ENCODE measurements at regions of chr10 and their contacts with region 1.

Region 1: DNA sequence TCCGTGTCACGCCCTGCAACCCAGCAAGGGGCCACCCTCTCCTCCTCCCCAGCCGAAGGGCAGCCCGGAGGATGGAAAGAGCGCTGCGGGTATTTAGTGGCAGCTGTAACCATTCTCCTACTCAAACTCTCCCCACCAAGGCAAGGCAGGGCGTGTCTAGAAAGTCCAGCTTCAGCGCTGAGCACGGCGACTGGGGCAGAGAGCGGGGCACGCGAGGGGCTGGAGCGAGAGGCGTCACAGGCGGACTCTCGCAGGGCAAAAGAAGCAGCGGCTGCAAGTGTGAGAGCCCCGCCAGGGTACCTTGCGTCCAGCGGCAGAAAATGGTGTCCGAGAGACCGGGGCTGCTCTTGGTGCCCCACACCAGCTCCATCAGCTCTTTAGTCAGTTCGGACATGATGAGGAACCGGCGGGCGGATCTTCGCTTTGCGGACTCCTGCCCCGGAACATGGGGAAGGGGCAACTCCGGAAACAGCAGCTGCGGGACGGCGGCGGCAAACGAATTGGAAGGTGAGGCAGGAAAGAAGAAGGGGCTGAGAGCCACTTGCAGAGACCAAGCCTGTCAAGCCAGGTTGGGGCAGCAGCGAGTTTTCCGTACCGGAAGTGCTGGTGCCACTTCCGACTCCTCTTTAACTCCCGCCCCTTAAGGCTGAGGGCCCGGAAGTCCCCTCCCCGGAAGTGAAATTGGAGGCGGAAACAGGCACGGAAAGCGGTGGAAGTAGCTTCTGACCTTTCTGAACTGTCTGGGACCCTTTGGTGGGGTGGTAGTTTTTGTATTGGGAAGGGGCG is at the start of gene MINDY3:
- DNase-seq: peak; percentile 80 to 93 (median 84)
- ATAC-seq: peak; percentile 85
- H3K4me3 ChIP-seq: peak within 1 kb of the TSS; percentile 95
- H3K27ac ChIP-seq: peak within 1 kb of the TSS; percentile 71
- H3K4me1 ChIP-seq: peaks cover 6 to 14% of the 10 kb centered on the region in 2 experiments; a peak in 4 of 5 replicates
- H3K27me3 ChIP-seq: no peaks in the 10 kb centered on the region; a peak in 1 of 5 replicates
- CTCF ChIP-seq: no peak
- EP300 ChIP-seq: no peak
- POLR2A ChIP-seq: peak; percentile 81
- RAD21 ChIP-seq: no peak
- polyA plus RNA-seq, gene MINDY3: 34.2 to 35.9 TPM

Region 2: DNA sequence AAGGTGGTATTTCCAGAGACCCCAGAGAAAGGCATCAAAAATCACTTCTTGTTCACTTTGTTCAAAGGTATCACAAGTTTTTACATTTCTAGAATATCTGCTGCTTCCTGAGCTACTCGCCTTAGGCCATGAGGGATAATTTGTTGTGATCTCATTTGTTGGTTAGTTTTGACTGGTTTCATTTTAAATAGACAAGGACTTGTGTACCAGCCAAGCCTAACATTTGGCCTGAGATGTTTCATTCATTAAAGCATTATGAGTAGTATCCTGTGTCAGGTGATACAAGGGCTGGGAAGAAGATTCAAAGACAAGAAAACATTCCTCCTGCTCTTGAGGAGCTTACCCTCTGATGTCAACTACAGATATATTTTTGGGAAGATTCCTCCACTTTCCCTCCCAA is 318.7 kb before region 1 on chr10:
- CTCF ChIA-PET with region 1: no interaction called
- POLR2A ChIA-PET with region 1: no interaction called
- in situ Hi-C with region 1: no loop called
- intact Hi-C with region 1: no loop called
- DNase-seq: no peak
- ATAC-seq: no peak
- H3K4me3 ChIP-seq: no peak overlapping the region
- H3K27ac ChIP-seq: no peak overlapping the region
- H3K4me1 ChIP-seq: no peaks in the 10 kb centered on the region
- H3K27me3 ChIP-seq: peaks cover 0 to 2% of the 10 kb centered on the region in 2 experiments; a peak in 2 of 5 replicates
- CTCF ChIP-seq: no peak
- EP300 ChIP-seq: no peak
- POLR2A ChIP-seq: no peak
- RAD21 ChIP-seq: no peak

Region 3: GRCh38 chr10:15775513-15775912 is 84.6 kb before region 1 on chr10:
- CTCF ChIA-PET with region 1: no interaction called
- POLR2A ChIA-PET with region 1: no interaction called
- in situ Hi-C with region 1: no loop called
- intact Hi-C with region 1: no loop called
- DNase-seq: no peak
- ATAC-seq: no peak
- H3K4me3 ChIP-seq: no peak overlapping the region
- H3K27ac ChIP-seq: no peak overlapping the region
- H3K4me1 ChIP-seq: no peaks in the 10 kb centered on the region
- H3K27me3 ChIP-seq: no peaks in the 10 kb centered on the region
- CTCF ChIP-seq: no peak
- EP300 ChIP-seq: no peak
- POLR2A ChIP-seq: no peak
- RAD21 ChIP-seq: no peak

Region 4: DNA sequence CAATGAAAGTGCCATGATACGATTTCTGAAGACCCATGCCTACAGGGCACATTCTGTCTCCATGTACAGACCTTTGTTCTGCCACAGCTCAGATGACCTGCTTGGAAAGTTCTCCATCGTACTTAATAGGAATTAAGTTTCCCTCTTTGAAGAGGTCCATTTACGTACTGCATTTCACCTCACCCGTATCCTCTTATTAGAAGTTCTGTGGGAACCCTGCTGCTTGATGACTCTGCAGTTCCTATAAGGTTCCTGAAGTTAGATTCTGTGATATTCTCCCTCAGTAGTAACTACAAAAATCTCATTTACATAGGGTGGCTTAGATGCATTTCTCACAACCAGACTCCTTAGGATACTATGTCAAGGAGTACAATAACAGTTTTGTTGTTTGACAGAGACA is 50.6 kb before region 1 on chr10:
- CTCF ChIA-PET with region 1: no interaction called
- POLR2A ChIA-PET with region 1: no interaction called
- in situ Hi-C with region 1: no loop called
- intact Hi-C with region 1: loop called (anchors 5 kb)
- DNase-seq: peak in 2 of 4 experiments; percentile 31 to 51
- ATAC-seq: peak; percentile 62
- H3K4me3 ChIP-seq: peak overlapping the region; percentile 2; the same call in 1 of the 2 replicates
- H3K27ac ChIP-seq: peak overlapping the region; percentile 53
- H3K4me1 ChIP-seq: peaks cover 0 to 31% of the 10 kb centered on the region in 2 experiments; a peak in 2 of 5 replicates
- H3K27me3 ChIP-seq: no peaks in the 10 kb centered on the region
- CTCF ChIP-seq: no peak
- EP300 ChIP-seq: no peak
- POLR2A ChIP-seq: no peak
- RAD21 ChIP-seq: no peak

Region 5: GRCh38 chr10:16242859-16243613 is 382.9 kb after region 1 on chr10:
- CTCF ChIA-PET with region 1: no interaction called
- POLR2A ChIA-PET with region 1: no interaction called
- in situ Hi-C with region 1: no loop called
- intact Hi-C with region 1: no loop called
- DNase-seq: no peak
- ATAC-seq: no peak
- H3K4me3 ChIP-seq: no peak overlapping the region
- H3K27ac ChIP-seq: no peak overlapping the region
- H3K4me1 ChIP-seq: no peaks in the 10 kb centered on the region
- H3K27me3 ChIP-seq: no peaks in the 10 kb centered on the region; a peak in 1 of 5 replicates
- CTCF ChIP-seq: no peak
- EP300 ChIP-seq: no peak
- POLR2A ChIP-seq: no peak
- RAD21 ChIP-seq: no peak